ENCODE measurements at regions of chr1 and their contacts with region 1.

Region 1: GRCh38 chr1:223133824-223134435 is 9.1 kb downstream of the TLR5 start:
- DNase-seq: peak; percentile 83 to 89 (median 88)
- H3K4me3 ChIP-seq: peak overlapping the region; percentile 41
- H3K27ac ChIP-seq: peak overlapping the region in 1 of 2 donors; percentile 58
- H3K4me1 ChIP-seq: peaks cover 11% of the 10 kb centered on the region
- H3K27me3 ChIP-seq: no peaks in the 10 kb centered on the region
- CTCF ChIP-seq: peak in 2 of 3 donors; percentile 79 to 87
- EP300 ChIP-seq: no peak
- POLR2A ChIP-seq: no peak

Region 2: DNA sequence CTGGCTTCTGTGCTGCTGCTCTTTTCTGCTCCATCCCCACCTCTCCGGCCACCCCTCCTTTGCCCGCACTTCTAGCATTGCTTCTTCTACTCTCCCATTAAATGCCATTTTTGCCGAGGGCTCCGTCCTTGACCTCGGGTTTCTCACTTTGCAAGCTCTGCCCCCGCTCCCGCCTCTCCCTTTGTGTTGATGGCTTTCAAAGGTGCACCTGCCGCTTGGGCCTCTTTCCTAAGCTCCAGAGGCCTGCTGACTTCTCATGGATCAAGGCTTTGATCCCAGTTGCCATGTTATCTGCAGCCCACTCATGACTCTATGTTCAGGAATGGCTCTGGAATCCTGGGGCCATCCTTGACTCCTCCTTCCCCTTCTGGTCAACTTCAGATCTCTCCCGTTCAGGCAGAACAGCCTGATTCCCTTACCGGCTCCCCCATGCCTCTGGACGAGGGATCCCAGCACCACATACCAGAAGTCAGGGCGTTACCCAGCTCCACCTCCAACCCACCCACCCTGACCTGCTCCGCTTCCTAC is 45.2 kb before region 1 on chr1:
- intact Hi-C with region 1: no loop called
- DNase-seq: no peak
- H3K4me3 ChIP-seq: no peak overlapping the region
- H3K27ac ChIP-seq: no peak overlapping the region
- H3K4me1 ChIP-seq: peaks cover 2% of the 10 kb centered on the region
- H3K27me3 ChIP-seq: no peaks in the 10 kb centered on the region
- CTCF ChIP-seq: no peak
- EP300 ChIP-seq: no peak
- POLR2A ChIP-seq: no peak

Region 3: DNA sequence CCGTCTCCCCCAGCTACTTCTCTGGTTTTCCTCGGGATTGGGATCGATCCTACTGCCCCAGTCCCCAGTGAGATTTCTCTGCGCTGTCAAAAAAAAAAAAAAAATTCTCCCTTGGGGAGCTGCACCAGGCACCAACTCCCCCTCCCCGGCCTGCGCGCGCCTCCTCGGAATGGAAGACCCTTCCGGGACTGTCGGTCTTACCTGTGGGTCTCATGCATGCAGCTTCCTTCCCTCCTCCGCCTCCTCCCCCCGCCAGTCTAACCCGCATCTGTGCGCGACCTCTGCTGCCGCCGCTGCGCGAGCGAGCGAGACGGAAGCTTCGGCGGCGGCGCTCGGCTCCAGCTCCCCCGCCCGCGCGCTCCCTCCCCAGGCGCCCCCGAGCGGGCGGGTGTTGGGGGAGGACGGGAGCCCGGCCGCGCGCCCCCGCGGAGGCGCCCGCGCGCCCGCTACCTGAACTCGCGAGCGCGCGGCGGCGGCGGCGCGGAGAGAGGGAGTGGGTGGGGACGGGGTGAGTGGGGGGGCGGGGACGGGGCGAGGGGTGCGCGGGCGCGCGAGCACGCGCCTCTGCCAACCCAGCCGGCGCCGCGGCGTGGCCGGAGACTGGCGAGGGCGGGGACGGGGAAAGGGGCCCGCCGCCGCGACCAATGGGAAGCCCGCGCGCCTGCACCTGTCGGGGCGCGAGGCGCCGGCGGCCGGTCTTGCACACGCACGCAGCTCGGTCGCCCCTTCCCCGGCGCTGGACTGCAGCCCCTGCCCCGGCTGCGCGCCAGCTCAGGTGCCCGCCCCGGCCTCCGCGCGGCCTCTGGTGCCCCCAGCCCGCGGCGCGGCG is 230.1 kb after region 1 on chr1 and contains the start of gene SUSD4:
- intact Hi-C with region 1: loop called in 1 of 4 experiments (anchors 5 kb)
- DNase-seq: peak; percentile 67 to 81 (median 73)
- H3K4me3 ChIP-seq: peak within 1 kb of the TSS; percentile 42
- H3K27ac ChIP-seq: peak within 1 kb of the TSS in 1 of 2 donors; percentile 48
- H3K4me1 ChIP-seq: no peaks in the 10 kb centered on the region
- H3K27me3 ChIP-seq: no peaks in the 10 kb centered on the region
- CTCF ChIP-seq: no peak
- EP300 ChIP-seq: no peak
- POLR2A ChIP-seq: no peak
- total RNA-seq, gene SUSD4: 30.6 to 80.5 (median 36.6) TPM

Region 4: DNA sequence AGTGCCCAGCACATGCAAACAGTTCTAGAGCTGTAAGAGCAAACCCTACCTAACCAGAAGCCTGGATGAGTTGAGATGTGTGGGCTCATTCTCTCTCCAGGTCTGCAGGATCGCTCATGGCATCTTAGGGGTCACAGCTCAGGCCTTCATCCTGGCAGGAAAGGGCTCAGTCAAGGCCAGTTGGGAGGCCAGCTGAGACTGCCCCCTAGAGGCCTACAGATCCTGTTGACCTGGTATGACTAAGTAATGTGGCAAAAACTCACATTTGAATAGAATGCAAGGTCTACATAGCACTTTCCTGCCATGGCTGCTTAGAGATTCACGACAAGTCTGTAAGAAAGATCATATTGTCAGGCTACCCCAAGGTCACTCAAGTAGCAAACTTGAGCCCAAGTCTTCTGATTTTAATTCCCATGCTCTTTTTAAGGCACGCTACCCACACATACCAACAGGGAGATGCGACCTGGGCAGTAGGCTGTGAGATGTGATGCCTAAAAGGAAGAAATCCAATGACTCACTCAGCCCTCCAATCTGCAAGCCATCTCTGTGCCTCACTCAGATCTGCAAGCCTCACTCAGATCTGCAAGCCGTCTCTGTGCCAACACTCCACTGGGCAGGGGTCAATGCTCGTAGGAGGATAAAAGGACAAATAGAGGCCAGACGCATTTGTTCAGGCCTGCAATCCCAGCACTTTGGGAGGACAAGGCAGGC is 536.7 kb after region 1 on chr1:
- intact Hi-C with region 1: loop called in 1 of 4 experiments (anchors 10 kb)
- DNase-seq: no peak
- H3K4me3 ChIP-seq: no peak overlapping the region
- H3K27ac ChIP-seq: no peak overlapping the region
- H3K4me1 ChIP-seq: no peaks in the 10 kb centered on the region
- H3K27me3 ChIP-seq: no peaks in the 10 kb centered on the region
- CTCF ChIP-seq: no peak
- EP300 ChIP-seq: no peak
- POLR2A ChIP-seq: no peak

Measured in ovary (tissue), 10 donors.